Heart right ventricle (tissue), 16 donors: ENCODE measurements at regions of chr10 and their contacts with region 1.

Region 1: DNA sequence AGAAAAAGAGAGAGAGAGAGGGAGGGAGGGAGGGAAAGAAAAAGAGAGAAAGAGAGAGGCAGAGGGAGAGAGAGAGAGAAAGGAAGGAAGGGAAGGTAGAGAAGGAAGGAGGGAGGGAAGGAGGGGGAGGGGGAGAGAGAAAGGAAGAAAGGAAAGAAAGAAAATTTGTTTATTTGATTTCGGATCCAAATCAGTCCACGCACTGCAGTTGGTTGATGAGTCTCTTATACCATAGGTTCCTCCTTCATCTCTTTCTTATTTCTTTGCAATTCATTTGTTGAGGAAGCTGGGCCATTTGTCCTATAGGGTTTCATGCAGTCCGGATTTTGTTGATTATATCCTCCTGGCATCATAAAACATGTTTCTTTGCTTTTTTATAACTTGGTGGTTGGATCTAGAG is 34.4 kb downstream of the AIFM2 start:
- DNase-seq: no peak
- ATAC-seq: no peak
- H3K4me3 ChIP-seq: no peak overlapping the region
- H3K27ac ChIP-seq: no peak overlapping the region
- H3K4me1 ChIP-seq: no peaks in the 10 kb centered on the region
- H3K27me3 ChIP-seq: no peaks in the 10 kb centered on the region
- CTCF ChIP-seq: no peak

Region 2: DNA sequence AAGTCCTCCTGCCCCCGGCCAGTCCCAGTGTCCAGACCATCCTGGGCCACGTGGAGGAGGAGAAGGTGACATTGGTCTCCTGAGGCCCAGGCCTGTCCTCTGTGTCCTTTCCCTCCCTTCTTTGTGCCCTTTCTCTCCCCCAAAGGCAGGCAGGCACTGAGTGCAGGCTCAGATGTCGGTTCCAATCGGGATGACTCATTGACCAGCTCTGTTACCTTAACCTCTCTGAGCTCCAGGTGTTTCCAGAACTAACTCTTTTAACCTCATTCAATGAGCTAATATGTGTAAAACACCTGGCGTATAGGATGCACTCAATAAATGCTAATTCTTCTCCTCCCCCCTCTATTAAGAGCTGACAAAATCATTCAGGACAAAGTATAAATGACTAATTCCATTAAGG is 19.9 kb before region 1 on chr10:
- intact Hi-C with region 1: loop called in 1 of 10 experiments (anchors 2 kb)
- DNase-seq: no peak
- ATAC-seq: peak in 1 of 8 donors; percentile 44
- H3K4me3 ChIP-seq: no peak overlapping the region
- H3K27ac ChIP-seq: no peak overlapping the region
- H3K4me1 ChIP-seq: no peaks in the 10 kb centered on the region
- H3K27me3 ChIP-seq: no peaks in the 10 kb centered on the region
- CTCF ChIP-seq: no peak

Region 3: GRCh38 chr10:70617798-70618568 is 519.7 kb after region 1 on chr10:
- intact Hi-C with region 1: no loop called
- DNase-seq: no peak
- ATAC-seq: no peak
- H3K4me3 ChIP-seq: no peak overlapping the region
- H3K27ac ChIP-seq: peak overlapping the region in 1 of 10 donors; percentile 57
- H3K4me1 ChIP-seq: peaks cover 0 to 14% (median 0%) of the 10 kb centered on the region in 9 donors
- H3K27me3 ChIP-seq: no peaks in the 10 kb centered on the region
- CTCF ChIP-seq: no peak